AG04449 (cell line): ENCODE measurements at regions of chr13 and their contacts with region 1.

Region 1: GRCh38 chr13:41931337-41931736 is 29.6 kb downstream of the VWA8 start:
- DNase-seq: peak; percentile 10
- H3K4me3 ChIP-seq: no peak overlapping the region
- CTCF ChIP-seq: no peak

Region 2: GRCh38 chr13:41942462-41943094 is 11.2 kb after region 1 on chr13:
- CTCF ChIA-PET with region 1: interaction called, 16 read pairs
- POLR2A ChIA-PET with region 1: no interaction called
- DNase-seq: peak; percentile 56
- H3K4me3 ChIP-seq: no peak overlapping the region
- CTCF ChIP-seq: peak; percentile 54

Region 3: DNA sequence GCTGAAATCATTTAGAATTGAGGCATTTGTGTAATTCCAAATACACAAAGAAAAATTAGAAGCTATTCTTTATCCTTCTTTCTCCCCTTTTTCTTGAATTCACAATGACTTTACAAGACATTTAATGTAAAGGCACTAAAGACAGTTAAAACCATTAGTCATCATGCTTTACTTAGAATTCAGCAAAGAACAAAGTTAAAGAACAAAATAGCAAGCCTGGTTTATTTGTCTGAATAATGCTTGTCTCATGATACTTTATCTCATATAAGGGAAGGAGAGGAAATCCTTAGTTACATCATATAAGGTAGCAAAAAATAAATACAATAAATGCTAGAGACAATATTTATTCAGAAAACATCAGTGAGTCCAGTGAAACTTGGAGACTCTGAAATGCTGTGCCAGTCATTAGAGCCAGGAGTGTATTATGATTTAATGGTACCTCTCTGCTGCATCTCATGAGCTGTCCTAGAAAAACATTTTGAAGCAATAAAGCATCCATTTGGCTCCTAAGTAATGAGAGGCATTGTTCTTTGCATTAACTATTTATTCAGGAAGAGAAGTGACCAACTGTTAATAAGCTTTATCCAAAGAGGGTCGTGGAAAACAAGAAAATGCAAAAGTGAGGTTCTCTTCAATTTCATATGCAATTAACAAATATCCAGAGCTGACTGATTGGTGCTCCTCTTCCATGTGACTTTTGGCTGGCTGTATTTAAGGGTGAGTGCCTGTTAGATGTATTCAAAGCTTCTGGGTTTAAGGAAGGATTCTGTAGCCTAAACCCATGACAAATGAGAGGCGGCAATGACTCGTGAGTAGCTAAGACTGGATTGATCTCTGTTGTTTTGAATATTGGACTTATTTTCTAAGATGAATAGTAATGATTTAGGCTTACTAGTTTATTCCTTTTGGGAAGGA is 222.1 kb after region 1 on chr13:
- CTCF ChIA-PET with region 1: no interaction called
- POLR2A ChIA-PET with region 1: no interaction called
- DNase-seq: no peak
- H3K4me3 ChIP-seq: no peak overlapping the region
- CTCF ChIP-seq: no peak